ENCODE measurements at regions of chr11 and their contacts with region 1.

Region 1: GRCh38 chr11:134062265-134063123 is 6.4 kb upstream of the JAM3 start:
- DNase-seq: peak; percentile 68

Region 2: DNA sequence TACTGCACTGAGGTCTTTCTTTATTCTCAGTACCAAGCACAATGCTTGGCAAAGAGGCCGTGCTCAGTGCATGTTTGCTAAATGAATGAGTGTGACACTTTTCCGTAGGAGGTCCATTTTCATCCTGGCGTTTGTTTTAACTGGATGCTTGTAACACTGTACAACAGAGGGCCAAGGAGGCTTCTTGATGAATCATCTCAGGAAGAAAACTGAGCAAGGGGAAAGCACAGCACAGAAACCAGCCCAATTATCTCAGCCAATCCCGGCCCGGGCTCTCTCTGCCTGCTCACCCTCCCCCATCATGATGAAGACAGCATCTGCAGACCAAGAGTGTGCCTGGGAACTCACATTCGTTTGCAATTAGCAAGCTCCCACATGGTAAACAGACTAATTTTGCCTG is 1100.5 kb before region 1 on chr11:
- intact Hi-C with region 1: loop called in 1 of 2 experiments (anchors 5 kb)
- DNase-seq: no peak

Measured in posterior vena cava (tissue), 2 donors.